Mammary epithelial cell (primary cell): ENCODE measurements at regions of chr3 and their contacts with region 1.

Region 1: GRCh38 chr3:12556671-12557472 is at the start of gene MKRN2:
- DNase-seq: peak; percentile 89
- H3K4me3 ChIP-seq: peak within 1 kb of the TSS; percentile 95 to 97 (median 96)
- H3K27ac ChIP-seq: peak within 1 kb of the TSS; percentile 87
- H3K4me1 ChIP-seq: peaks cover 19% of the 10 kb centered on the region
- H3K27me3 ChIP-seq: no peaks in the 10 kb centered on the region
- CTCF ChIP-seq: no peak
- total RNA-seq, gene MKRN2: 26.3 to 35.0 TPM

Region 2: GRCh38 chr3:12073106-12073505 is 483.8 kb before region 1 on chr3:
- CTCF ChIA-PET with region 1: no interaction called
- dilution Hi-C with region 1: no loop called
- in situ Hi-C with region 1: no loop called
- intact Hi-C with region 1: no loop called
- DNase-seq: no peak
- H3K4me3 ChIP-seq: no peak overlapping the region
- H3K27ac ChIP-seq: no peak overlapping the region
- H3K4me1 ChIP-seq: no peaks in the 10 kb centered on the region
- H3K27me3 ChIP-seq: no peaks in the 10 kb centered on the region
- CTCF ChIP-seq: no peak

Region 3: DNA sequence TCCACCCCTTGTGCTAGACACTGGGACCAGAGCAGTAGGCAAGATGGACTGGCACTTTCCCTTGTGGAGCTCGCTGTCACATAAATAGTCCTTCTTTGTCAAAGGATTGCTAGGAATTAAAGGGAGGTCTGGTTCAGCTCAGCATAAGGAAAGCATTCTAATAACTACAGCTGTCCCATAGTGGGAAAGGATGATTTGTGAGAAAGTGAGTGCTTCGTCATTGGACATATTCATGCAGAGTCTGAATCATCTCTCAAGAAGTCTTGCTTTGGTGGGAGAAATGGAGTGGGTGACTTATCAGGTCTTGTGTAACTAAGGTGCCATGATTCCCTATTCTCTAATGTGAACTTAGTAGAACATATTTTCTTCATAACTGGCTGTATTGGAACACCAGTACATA is 253.3 kb before region 1 on chr3:
- CTCF ChIA-PET with region 1: no interaction called
- dilution Hi-C with region 1: no loop called
- in situ Hi-C with region 1: no loop called
- intact Hi-C with region 1: no loop called
- DNase-seq: peak; percentile 74
- H3K4me3 ChIP-seq: no peak overlapping the region
- H3K27ac ChIP-seq: no peak overlapping the region
- H3K4me1 ChIP-seq: peaks cover 13% of the 10 kb centered on the region
- H3K27me3 ChIP-seq: no peaks in the 10 kb centered on the region
- CTCF ChIP-seq: no peak

Region 4: GRCh38 chr3:12545300-12545791 is 11.5 kb before region 1 on chr3 and contains the start of gene MKRN2OS:
- CTCF ChIA-PET with region 1: interaction called, 3 read pairs
- dilution Hi-C with region 1: no loop called
- in situ Hi-C with region 1: no loop called
- intact Hi-C with region 1: loop called (anchors 1 kb)
- DNase-seq: peak; percentile 91
- H3K4me3 ChIP-seq: peak within 1 kb of the TSS; percentile 49 to 61 (median 57)
- H3K27ac ChIP-seq: peak within 1 kb of the TSS; percentile 47
- H3K4me1 ChIP-seq: no peaks in the 10 kb centered on the region
- H3K27me3 ChIP-seq: no peaks in the 10 kb centered on the region
- CTCF ChIP-seq: no peak
- total RNA-seq, gene MKRN2OS: 2.3 to 2.7 TPM